CD4-positive, alpha-beta memory T cell (primary cell): ENCODE measurements at regions of chr21 and their contacts with region 1.

Region 1: DNA sequence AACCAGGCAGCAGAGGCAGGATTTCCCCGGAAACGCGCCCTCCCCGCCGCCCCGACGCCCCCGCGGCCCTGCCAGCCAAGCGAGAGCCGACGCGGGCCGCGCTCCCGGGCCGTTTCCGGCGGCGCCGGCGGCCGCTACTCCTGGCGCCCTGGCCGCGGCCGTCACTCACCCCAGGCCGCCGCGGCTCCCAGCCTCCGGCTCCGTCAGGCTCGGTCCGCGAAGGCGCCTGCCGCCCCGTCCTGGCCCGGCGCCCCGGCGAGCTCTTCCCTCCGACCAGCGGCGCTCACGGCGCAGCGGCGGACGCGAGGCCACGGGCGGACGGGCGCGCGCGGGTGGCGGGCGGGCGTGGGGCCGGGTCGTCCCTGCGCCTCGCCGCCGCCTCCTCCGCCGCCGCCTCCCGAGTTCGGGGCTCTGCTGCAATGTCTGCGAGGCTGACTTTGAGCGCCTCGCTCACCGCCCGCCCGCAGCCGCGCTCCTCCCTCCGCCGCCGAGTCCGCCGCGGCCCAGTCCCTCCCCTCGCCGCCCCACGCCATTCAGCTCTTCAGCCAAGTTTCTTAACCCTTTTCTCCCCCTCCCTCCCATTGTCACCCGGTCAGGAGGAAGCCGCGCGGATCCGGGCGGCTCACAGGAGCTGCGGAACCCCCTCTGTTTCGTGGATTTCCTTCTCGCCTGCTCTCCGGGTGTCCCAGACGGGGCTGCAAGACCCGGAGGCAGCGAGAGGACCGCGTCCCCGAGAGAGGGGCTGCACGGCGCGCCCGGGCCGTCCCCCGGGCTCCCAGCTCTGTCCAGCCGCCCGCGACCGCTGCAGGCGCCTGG is at the start of gene NRIP1:
- DNase-seq: peak; percentile 79 to 86 (median 85)
- H3K4me3 ChIP-seq: peak within 1 kb of the TSS; percentile 66 to 72
- H3K4me3 Mint-ChIP-seq: peak within 1 kb of the TSS; percentile 92 to 97 (median 96)
- H3K27ac ChIP-seq: peak within 1 kb of the TSS; percentile 68
- H3K27ac Mint-ChIP-seq: peak within 1 kb of the TSS; percentile 95 to 99 (median 97)
- H3K4me1 ChIP-seq: peaks cover 27% of the 10 kb centered on the region
- H3K4me1 Mint-ChIP-seq: peaks cover 22 to 53% (median 38%) of the 10 kb centered on the region in 4 donors
- H3K27me3 ChIP-seq: no peaks in the 10 kb centered on the region
- H3K27me3 Mint-ChIP-seq: peaks cover 0 to 18% of the 10 kb centered on the region in 2 donors
- total RNA-seq, gene NRIP1: 22.8 to 24.5 TPM

Region 2: GRCh38 chr21:14382835-14383594 is 681.8 kb before region 1 on chr21 and contains the start of gene HSPA13:
- CTCF ChIA-PET with region 1: no interaction called
- POLR2A ChIA-PET with region 1: interaction called, 8 read pairs
- intact Hi-C with region 1: loop called (anchors 1 kb)
- DNase-seq: peak; percentile 98 to 100 (median 99)
- H3K4me3 ChIP-seq: peak within 1 kb of the TSS; percentile 77 to 80
- H3K4me3 Mint-ChIP-seq: peak within 1 kb of the TSS; percentile 98 to 100 (median 100)
- H3K27ac ChIP-seq: peak within 1 kb of the TSS; percentile 84
- H3K27ac Mint-ChIP-seq: peak within 1 kb of the TSS; percentile 99 to 100 (median 100)
- H3K4me1 ChIP-seq: peaks cover 35% of the 10 kb centered on the region
- H3K4me1 Mint-ChIP-seq: peaks cover 16 to 51% (median 32%) of the 10 kb centered on the region in 4 donors
- H3K27me3 ChIP-seq: no peaks in the 10 kb centered on the region
- H3K27me3 Mint-ChIP-seq: no peaks in the 10 kb centered on the region
- total RNA-seq, gene HSPA13: 32.0 to 38.5 TPM

Region 3: DNA sequence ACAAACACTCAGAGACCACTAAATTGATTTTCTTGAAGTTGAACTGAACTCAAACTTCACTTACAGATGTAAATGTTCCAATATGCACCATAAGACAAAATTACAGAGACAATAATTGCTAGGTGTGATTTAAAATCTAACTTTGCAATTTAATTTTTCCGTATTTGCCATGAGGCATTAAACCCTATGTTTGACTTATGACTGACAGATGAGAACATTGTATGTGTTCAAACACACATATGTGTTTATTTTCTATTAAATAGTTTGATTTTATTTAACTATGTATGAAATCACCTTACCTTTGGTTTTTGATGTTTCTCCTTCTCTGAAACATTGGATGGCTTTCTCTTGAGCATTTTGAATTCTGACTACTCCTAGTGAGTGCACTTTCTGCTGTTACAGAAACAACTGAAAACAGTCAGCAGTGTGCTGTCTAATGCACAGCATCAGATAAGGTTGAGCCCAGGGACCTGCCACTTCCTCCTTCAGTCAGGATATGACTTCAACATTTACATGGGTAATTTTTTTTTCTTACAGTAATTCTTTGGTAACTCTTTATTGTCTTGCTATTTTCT is 518.8 kb before region 1 on chr21 and contains the start of gene SAMSN1:
- CTCF ChIA-PET with region 1: no interaction called
- POLR2A ChIA-PET with region 1: no interaction called
- intact Hi-C with region 1: loop called (anchors 5 kb)
- DNase-seq: peak; percentile 79 to 90 (median 85)
- H3K4me3 ChIP-seq: peak within 1 kb of the TSS; percentile 48 to 98
- H3K4me3 Mint-ChIP-seq: peak within 1 kb of the TSS; percentile 89 to 99 (median 94)
- H3K27ac ChIP-seq: peak within 1 kb of the TSS; percentile 78
- H3K27ac Mint-ChIP-seq: peak within 1 kb of the TSS; percentile 87 to 97 (median 95)
- H3K4me1 ChIP-seq: peaks cover 78% of the 10 kb centered on the region
- H3K4me1 Mint-ChIP-seq: peaks cover 42 to 79% (median 61%) of the 10 kb centered on the region in 4 donors
- H3K27me3 ChIP-seq: no peaks in the 10 kb centered on the region
- H3K27me3 Mint-ChIP-seq: no peaks in the 10 kb centered on the region
- total RNA-seq, gene SAMSN1: 58.0 to 59.5 TPM

Region 4: DNA sequence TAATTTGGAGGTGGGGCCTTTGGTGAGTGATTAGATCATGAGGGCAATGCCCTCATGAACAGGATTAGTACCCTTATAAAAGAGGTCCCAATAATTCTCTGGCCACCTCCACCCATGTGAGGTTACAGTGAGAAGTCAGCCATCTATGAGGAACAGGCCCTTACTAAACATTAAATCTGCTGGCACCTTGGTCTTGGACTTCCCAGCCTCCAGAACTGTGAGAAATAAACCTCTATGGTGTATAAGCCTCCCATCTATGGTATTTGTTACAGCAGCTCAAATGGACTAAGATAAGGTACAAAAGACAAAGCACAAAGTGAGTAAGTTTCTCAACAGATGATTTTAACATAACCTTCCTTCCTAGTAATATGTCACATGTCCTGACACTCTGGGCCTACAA is 22.3 kb before region 1 on chr21:
- CTCF ChIA-PET with region 1: no interaction called
- POLR2A ChIA-PET with region 1: no interaction called
- intact Hi-C with region 1: no loop called
- DNase-seq: no peak
- H3K4me3 ChIP-seq: no peak overlapping the region
- H3K4me3 Mint-ChIP-seq: no peak overlapping the region
- H3K27ac ChIP-seq: no peak overlapping the region
- H3K27ac Mint-ChIP-seq: no peak overlapping the region
- H3K4me1 ChIP-seq: no peaks in the 10 kb centered on the region
- H3K4me1 Mint-ChIP-seq: peaks cover 0 to 15% (median 10%) of the 10 kb centered on the region in 4 donors
- H3K27me3 ChIP-seq: no peaks in the 10 kb centered on the region
- H3K27me3 Mint-ChIP-seq: no peaks in the 10 kb centered on the region

Region 5: DNA sequence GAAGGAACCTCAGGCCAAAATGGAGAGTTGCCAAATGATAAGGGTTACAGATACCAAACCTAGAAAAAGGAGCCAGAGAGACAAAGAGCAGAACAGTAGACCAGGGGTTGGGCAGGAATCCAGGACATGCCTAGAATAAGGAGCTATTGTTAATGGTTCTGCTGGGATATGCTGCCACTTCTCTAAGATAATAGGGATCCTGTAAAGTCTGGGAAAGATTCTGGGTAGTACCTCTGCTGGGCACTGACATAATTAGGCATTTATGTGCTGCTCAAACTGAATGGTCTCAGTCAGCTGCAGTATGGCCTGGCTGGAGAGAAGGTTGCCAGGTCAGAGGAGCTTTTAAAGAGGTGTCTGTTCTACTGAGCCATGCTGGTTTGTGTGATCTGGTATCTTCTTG is 19.9 kb after region 1 on chr21:
- CTCF ChIA-PET with region 1: no interaction called
- POLR2A ChIA-PET with region 1: no interaction called
- intact Hi-C with region 1: no loop called
- DNase-seq: no peak
- H3K4me3 ChIP-seq: no peak overlapping the region
- H3K4me3 Mint-ChIP-seq: no peak overlapping the region
- H3K27ac ChIP-seq: no peak overlapping the region
- H3K27ac Mint-ChIP-seq: no peak overlapping the region
- H3K4me1 ChIP-seq: no peaks in the 10 kb centered on the region
- H3K4me1 Mint-ChIP-seq: no peaks in the 10 kb centered on the region
- H3K27me3 ChIP-seq: no peaks in the 10 kb centered on the region
- H3K27me3 Mint-ChIP-seq: peaks cover 1 to 6% of the 10 kb centered on the region in 2 donors

Region 6: DNA sequence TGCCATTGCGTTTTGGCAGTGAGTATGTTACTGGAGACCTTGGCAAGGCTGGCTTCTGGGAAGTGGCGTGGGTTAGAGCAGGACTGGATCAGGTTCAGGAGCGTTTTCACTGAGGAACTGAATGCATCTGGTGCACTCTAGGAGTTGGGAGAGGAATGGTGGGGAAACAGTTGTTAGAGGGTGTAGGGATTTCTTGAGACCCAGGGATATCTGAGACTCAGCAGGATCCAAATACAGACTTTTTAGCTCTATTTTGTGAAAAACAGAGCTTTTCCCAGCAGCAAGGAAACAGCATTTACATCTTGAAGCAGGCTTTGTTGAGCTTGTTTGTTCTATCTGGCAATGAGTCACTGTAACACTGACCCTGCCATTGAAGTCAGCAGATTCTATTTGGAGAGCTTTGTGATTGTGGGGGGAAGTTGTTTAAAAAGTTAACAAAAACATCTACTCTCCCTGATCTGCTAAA is 56.9 kb after region 1 on chr21:
- CTCF ChIA-PET with region 1: no interaction called
- POLR2A ChIA-PET with region 1: no interaction called
- intact Hi-C with region 1: no loop called
- DNase-seq: no peak
- H3K4me3 ChIP-seq: no peak overlapping the region
- H3K4me3 Mint-ChIP-seq: no peak overlapping the region
- H3K27ac ChIP-seq: no peak overlapping the region
- H3K27ac Mint-ChIP-seq: no peak overlapping the region
- H3K4me1 ChIP-seq: no peaks in the 10 kb centered on the region
- H3K4me1 Mint-ChIP-seq: peaks cover 0 to 1% (median 0%) of the 10 kb centered on the region in 4 donors
- H3K27me3 ChIP-seq: no peaks in the 10 kb centered on the region
- H3K27me3 Mint-ChIP-seq: peaks cover 2 to 7% of the 10 kb centered on the region in 2 donors

Region 7: GRCh38 chr21:15159382-15160020 is 94.7 kb after region 1 on chr21:
- CTCF ChIA-PET with region 1: no interaction called
- POLR2A ChIA-PET with region 1: no interaction called
- intact Hi-C with region 1: no loop called
- DNase-seq: no peak
- H3K4me3 ChIP-seq: no peak overlapping the region
- H3K4me3 Mint-ChIP-seq: no peak overlapping the region
- H3K27ac ChIP-seq: no peak overlapping the region
- H3K27ac Mint-ChIP-seq: no peak overlapping the region
- H3K4me1 ChIP-seq: no peaks in the 10 kb centered on the region
- H3K4me1 Mint-ChIP-seq: no peaks in the 10 kb centered on the region
- H3K27me3 ChIP-seq: no peaks in the 10 kb centered on the region
- H3K27me3 Mint-ChIP-seq: peaks cover 4 to 10% of the 10 kb centered on the region in 2 donors

Region 8: DNA sequence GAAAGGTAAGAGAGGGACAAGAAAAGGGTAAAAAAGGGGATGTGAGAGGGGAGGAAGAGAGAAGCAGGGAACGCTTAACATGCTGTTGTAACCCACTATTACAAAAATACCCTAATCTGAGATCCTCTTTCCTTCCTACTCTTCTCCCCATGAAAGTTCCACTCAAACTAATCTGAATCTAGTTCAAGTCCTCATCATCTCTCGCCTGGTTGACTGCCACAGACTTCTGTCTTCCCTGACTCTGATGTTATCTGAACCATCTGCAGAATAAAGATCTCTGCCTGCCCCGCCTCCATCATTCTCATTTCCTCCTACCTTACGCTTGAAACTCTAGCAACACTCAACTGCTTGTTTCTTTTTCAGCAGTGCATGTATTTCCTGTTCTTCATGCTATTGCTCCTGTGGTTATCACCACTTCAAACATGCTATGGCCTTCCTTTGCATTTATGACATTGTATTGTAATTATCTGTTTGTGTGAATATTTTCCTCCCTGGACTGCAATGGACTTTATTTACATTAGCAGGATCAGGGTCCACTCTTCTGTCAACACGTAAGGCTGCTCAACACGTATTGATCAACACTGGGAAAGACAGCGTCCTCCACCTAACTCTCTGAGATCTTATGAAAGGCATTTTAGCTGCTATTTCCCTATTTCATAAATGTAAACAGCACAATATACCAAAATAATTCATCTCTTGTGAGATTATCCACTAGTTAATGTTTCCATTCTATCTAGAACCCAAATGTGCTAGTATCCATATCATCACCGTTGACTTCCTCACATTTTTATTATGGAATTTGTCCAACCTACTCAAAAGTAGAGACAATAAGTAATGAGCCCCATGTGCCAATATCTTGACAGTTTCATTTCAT is 449.5 kb after region 1 on chr21:
- CTCF ChIA-PET with region 1: no interaction called
- POLR2A ChIA-PET with region 1: interaction called, 4 read pairs
- intact Hi-C with region 1: loop called (anchors 10 kb)
- DNase-seq: peak; percentile 74 to 84 (median 77)
- H3K4me3 ChIP-seq: peak overlapping the region in 1 of 2 donors; percentile 39
- H3K4me3 Mint-ChIP-seq: peak overlapping the region; percentile 31 to 86 (median 66)
- H3K27ac ChIP-seq: peak overlapping the region; percentile 30
- H3K27ac Mint-ChIP-seq: peak overlapping the region; percentile 19 to 94 (median 87)
- H3K4me1 ChIP-seq: peaks cover 33% of the 10 kb centered on the region
- H3K4me1 Mint-ChIP-seq: peaks cover 17 to 26% (median 23%) of the 10 kb centered on the region in 4 donors
- H3K27me3 ChIP-seq: no peaks in the 10 kb centered on the region
- H3K27me3 Mint-ChIP-seq: no peaks in the 10 kb centered on the region

Region 9: DNA sequence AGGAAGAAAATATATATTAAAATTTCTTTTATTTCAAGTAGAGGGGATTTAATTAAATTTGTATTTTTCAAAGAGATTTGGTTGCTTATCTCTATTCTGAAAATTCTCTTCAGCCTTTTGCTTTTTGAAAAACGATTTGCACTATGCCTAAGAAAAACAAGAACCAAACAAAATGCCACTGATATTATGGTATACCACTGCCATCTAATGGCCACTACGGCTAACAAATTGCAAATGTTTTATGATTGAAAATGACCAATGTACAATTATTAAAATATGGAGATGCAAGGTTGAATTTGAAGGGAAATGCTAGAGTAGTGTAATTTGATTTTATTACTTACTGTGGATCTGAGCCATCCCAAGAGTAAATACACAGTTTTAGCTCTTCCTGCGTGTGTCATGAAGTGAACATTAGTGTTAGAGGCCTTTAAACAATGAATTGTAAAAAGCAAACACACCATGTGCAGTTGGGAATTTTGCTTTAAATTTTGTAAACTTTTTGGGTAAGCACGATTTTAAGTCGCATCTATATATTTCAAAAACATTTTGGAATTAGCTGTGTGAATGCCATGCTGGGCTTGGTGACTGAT is 527.6 kb after region 1 on chr21:
- CTCF ChIA-PET with region 1: interaction called, 3 read pairs
- POLR2A ChIA-PET with region 1: no interaction called
- intact Hi-C with region 1: loop called (anchors 2 kb)
- DNase-seq: peak in 4 of 5 donors; percentile 25 to 37 (median 32)
- H3K4me3 ChIP-seq: no peak overlapping the region
- H3K4me3 Mint-ChIP-seq: no peak overlapping the region
- H3K27ac ChIP-seq: no peak overlapping the region
- H3K27ac Mint-ChIP-seq: no peak overlapping the region
- H3K4me1 ChIP-seq: no peaks in the 10 kb centered on the region
- H3K4me1 Mint-ChIP-seq: no peaks in the 10 kb centered on the region
- H3K27me3 ChIP-seq: no peaks in the 10 kb centered on the region
- H3K27me3 Mint-ChIP-seq: peaks cover 6% of the 10 kb centered on the region in 2 donors

Region 10: GRCh38 chr21:15826147-15826780 is 761.5 kb after region 1 on chr21:
- CTCF ChIA-PET with region 1: no interaction called
- POLR2A ChIA-PET with region 1: no interaction called
- intact Hi-C with region 1: loop called (anchors 5 kb)
- DNase-seq: peak; percentile 26 to 46 (median 30)
- H3K4me3 ChIP-seq: no peak overlapping the region
- H3K4me3 Mint-ChIP-seq: no peak overlapping the region
- H3K27ac ChIP-seq: no peak overlapping the region
- H3K27ac Mint-ChIP-seq: peak overlapping the region in 2 of 7 donors; percentile 4 to 18
- H3K4me1 ChIP-seq: peaks cover 32% of the 10 kb centered on the region
- H3K4me1 Mint-ChIP-seq: peaks cover 25 to 36% (median 33%) of the 10 kb centered on the region in 4 donors
- H3K27me3 ChIP-seq: no peaks in the 10 kb centered on the region
- H3K27me3 Mint-ChIP-seq: no peaks in the 10 kb centered on the region